CD8-positive, alpha-beta T cell (primary cell): ENCODE measurements at regions of chr6 and their contacts with region 1.

Region 1: GRCh38 chr6:141183368-141183767 is 949.4 kb upstream of the GJE1 start:
- DNase-seq: no peak
- ATAC-seq: no peak
- H3K4me3 ChIP-seq: no peak overlapping the region
- H3K4me3 Mint-ChIP-seq: no peak overlapping the region
- H3K27ac ChIP-seq: no peak overlapping the region
- H3K27ac Mint-ChIP-seq: no peak overlapping the region
- H3K4me1 ChIP-seq: no peaks in the 10 kb centered on the region
- H3K4me1 Mint-ChIP-seq: no peaks in the 10 kb centered on the region
- H3K27me3 ChIP-seq: no peaks in the 10 kb centered on the region
- H3K27me3 Mint-ChIP-seq: no peaks in the 10 kb centered on the region
- CTCF ChIP-seq: no peak

Region 2: GRCh38 chr6:140845666-140846065 is 337.7 kb before region 1 on chr6:
- CTCF ChIA-PET with region 1: no interaction called
- POLR2A ChIA-PET with region 1: no interaction called
- intact Hi-C with region 1: no loop called
- DNase-seq: no peak
- ATAC-seq: no peak
- H3K4me3 ChIP-seq: no peak overlapping the region
- H3K4me3 Mint-ChIP-seq: no peak overlapping the region
- H3K27ac ChIP-seq: no peak overlapping the region
- H3K27ac Mint-ChIP-seq: no peak overlapping the region
- H3K4me1 ChIP-seq: no peaks in the 10 kb centered on the region
- H3K4me1 Mint-ChIP-seq: no peaks in the 10 kb centered on the region
- H3K27me3 ChIP-seq: no peaks in the 10 kb centered on the region
- H3K27me3 Mint-ChIP-seq: no peaks in the 10 kb centered on the region
- CTCF ChIP-seq: no peak

Region 3: DNA sequence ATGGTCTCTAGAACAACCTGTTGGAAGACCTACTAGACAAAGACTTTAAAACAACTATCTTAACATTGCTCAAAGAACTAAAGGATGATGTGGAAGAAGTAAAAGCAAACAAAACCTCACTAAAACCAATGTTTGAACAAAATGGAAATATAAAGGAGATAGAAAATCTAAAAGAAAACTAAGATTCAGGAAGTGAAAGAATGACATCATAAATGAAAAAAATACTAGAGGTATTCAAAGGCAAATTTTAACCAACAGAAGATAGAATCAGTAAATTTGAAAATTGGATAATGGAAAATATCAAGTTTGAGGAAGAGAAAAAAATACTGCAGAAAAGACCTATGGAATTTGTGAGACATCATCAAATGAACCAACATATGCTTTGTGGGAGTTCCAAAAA is 35.2 kb after region 1 on chr6:
- CTCF ChIA-PET with region 1: no interaction called
- POLR2A ChIA-PET with region 1: no interaction called
- intact Hi-C with region 1: loop called in 1 of 2 experiments (anchors 1 kb)
- DNase-seq: no peak
- ATAC-seq: no peak
- H3K4me3 ChIP-seq: no peak overlapping the region
- H3K4me3 Mint-ChIP-seq: no peak overlapping the region
- H3K27ac ChIP-seq: no peak overlapping the region
- H3K27ac Mint-ChIP-seq: no peak overlapping the region
- H3K4me1 ChIP-seq: no peaks in the 10 kb centered on the region
- H3K4me1 Mint-ChIP-seq: no peaks in the 10 kb centered on the region
- H3K27me3 ChIP-seq: no peaks in the 10 kb centered on the region
- H3K27me3 Mint-ChIP-seq: no peaks in the 10 kb centered on the region
- CTCF ChIP-seq: no peak